ENCODE measurements at regions of chr2 and their contacts with region 1.

Region 1: GRCh38 chr2:135252805-135253458 is 200.8 kb downstream of the RAB3GAP1 start:
- DNase-seq: no peak
- H3K4me3 Mint-ChIP-seq: no peak overlapping the region
- H3K27ac Mint-ChIP-seq: no peak overlapping the region
- H3K4me1 Mint-ChIP-seq: no peaks in the 10 kb centered on the region
- H3K27me3 Mint-ChIP-seq: no peaks in the 10 kb centered on the region

Region 2: GRCh38 chr2:134819334-134819733 is 433.6 kb before region 1 on chr2:
- CTCF ChIA-PET with region 1: no interaction called
- intact Hi-C with region 1: no loop called
- DNase-seq: no peak
- H3K4me3 Mint-ChIP-seq: no peak overlapping the region
- H3K27ac Mint-ChIP-seq: no peak overlapping the region
- H3K4me1 Mint-ChIP-seq: no peaks in the 10 kb centered on the region
- H3K27me3 Mint-ChIP-seq: peaks cover 6% of the 10 kb centered on the region

Region 3: GRCh38 chr2:135265960-135266490 is 13.1 kb after region 1 on chr2:
- CTCF ChIA-PET with region 1: no interaction called
- intact Hi-C with region 1: loop called (anchors 1 kb)
- DNase-seq: no peak
- H3K4me3 Mint-ChIP-seq: no peak overlapping the region
- H3K27ac Mint-ChIP-seq: no peak overlapping the region
- H3K4me1 Mint-ChIP-seq: no peaks in the 10 kb centered on the region
- H3K27me3 Mint-ChIP-seq: no peaks in the 10 kb centered on the region

Measured in activated naive CD4-positive, alpha-beta T cell treated with anti-CD3 and anti-CD28 coated beads for 36 hours (primary cell).